ENCODE measurements at regions of chr9 and their contacts with region 1.

Region 1: GRCh38 chr9:114505187-114506081 is at the start of gene WHRN:
- DNase-seq: peak; percentile 87 to 98 (median 95)

Region 2: DNA sequence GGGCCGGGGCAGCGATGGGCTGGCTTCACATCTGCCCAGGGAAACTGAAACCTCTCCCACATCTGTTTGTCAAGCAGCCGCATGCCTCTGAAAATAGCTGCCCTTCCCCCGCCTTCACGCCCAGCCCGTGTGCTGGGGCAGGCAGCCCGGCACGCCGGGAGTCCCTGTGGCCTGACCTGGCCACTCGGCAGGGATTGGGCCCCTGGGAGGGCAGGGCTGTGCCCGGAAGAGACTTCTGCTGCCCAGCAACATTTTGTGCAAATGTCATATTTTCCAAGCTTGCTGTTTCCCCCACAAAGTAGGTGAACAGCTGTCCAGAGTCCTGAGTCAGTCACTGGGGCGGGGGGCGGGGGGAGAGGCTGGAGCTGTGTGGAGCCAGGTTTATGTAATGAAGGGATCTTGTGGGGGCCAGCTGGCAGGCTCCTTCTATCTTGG is 341.9 kb before region 1 on chr9:
- intact Hi-C with region 1: no loop called
- DNase-seq: no peak

Region 3: GRCh38 chr9:114434878-114435311 is 70.5 kb before region 1 on chr9:
- intact Hi-C with region 1: loop called (anchors 5 kb)
- DNase-seq: peak in 27 of 42 donors; percentile 17 to 74 (median 52)

Region 4: DNA sequence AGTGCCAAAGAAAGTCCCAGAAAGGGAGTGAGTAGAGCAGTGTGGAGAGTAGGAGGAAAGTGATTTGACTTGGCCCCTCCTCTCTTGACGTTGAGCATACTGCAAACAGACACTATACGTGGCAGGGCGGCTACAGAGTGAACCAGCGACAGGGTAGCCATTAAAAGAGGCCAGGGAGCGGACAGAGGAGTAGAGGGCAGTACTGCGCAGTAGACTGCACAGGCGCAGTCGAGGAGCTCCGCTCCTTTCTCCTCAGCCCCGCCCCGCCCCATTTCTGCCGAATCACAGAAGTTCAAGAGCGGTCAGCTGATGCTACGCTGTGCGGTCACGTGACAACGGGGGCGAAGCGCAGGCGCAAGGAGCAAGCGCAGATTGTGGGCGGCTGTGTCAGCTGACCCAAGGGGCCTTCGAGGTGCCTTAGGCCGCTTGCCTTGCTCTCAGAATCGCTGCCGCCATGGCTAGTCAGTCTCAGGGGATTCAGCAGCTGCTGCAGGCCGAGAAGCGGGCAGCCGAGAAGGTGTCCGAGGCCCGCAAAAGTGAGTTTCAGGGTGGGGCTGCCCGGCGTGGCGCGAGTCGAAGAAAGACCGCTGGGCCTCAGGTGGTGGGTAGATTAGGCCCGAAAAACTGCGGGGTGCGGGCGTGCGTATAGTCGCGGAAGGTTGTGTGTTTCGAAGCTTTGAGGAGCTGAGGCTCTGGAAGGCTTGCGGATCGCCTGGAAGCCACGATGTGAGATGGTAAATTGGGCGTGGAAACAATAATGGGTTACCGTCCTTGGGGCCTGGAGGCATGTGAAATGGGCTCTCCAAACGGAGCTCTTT is 82.2 kb after region 1 on chr9 and contains the start of gene ATP6V1G1:
- intact Hi-C with region 1: loop called (anchors 5 kb)
- DNase-seq: peak; percentile 92 to 99 (median 97)

Region 5: GRCh38 chr9:114653556-114654159 is 148.2 kb after region 1 on chr9:
- intact Hi-C with region 1: loop called (anchors 10 kb)
- DNase-seq: peak in 39 of 42 donors; percentile 37 to 90 (median 76)

Measured in head of caudate nucleus (tissue), 42 donors.